Breast epithelium (tissue), 4 donors: ENCODE measurements at regions of chr6 and their contacts with region 1.

Region 1: GRCh38 chr6:150271501-150272263 is 97.1 kb upstream of the IYD start:
- DNase-seq: no peak
- H3K4me3 ChIP-seq: no peak overlapping the region
- H3K27ac ChIP-seq: no peak overlapping the region
- H3K4me1 ChIP-seq: no peaks in the 10 kb centered on the region
- H3K27me3 ChIP-seq: no peaks in the 10 kb centered on the region
- CTCF ChIP-seq: no peak
- POLR2A ChIP-seq: no peak

Region 2: DNA sequence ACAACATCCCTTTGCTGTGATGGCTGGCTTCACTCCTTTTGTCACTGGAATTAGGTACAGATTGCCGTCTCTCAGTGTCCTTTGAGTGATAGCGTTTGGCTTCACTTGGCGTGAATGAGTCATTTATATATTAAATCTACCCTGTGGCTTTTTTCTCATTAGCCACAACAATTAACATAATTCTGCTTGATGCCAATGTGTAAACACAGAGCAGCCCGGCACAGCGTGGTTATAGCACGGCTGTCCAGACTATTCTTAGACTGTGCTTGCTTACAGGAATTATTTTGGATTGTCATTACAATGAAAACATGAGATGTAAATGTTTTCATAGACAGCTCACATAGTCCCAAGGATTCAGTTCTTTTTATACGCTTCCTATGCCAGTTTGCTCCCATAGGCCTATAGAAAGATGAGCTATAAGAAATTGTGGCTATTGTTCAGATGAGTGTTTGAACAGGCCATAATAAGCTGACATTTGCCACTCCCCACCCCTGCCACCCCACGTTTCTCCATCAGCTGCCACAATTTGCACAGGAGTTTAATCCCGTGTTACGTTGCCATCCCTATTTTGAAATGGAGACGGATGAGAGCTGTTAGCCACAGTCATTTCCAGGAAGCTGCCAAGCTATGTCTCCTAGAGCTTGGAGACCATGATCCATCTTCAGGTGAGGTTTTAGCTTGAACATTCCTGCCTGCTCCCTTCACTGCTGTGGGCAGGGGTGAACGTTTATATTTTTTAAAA is 62.9 kb before region 1 on chr6:
- intact Hi-C with region 1: no loop called
- DNase-seq: no peak
- H3K4me3 ChIP-seq: no peak overlapping the region
- H3K27ac ChIP-seq: no peak overlapping the region
- H3K4me1 ChIP-seq: no peaks in the 10 kb centered on the region
- H3K27me3 ChIP-seq: no peaks in the 10 kb centered on the region
- CTCF ChIP-seq: no peak
- POLR2A ChIP-seq: no peak

Region 3: DNA sequence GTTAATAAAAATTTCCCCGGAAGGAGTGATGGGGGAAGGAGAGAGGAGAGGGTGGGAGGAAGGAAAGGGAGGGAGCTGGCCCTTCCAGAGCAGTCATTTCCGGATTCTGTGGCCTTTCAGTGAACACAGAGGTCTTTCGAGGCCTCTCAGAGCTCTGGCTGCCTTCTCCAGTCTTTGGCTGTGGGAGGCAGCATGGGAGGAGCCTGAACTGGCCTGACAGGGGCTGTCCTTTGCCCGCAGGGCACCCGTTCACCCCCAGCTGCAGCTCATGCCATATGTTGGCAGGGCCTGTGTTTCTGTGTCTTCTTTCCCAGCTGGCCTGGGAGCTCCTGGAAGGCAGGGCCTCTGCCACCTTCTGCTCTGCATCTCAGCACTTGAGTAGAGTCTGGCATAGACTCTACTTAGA is 33.3 kb before region 1 on chr6:
- intact Hi-C with region 1: loop called (anchors 1 kb)
- DNase-seq: peak in 1 of 2 donors; percentile 35
- H3K4me3 ChIP-seq: no peak overlapping the region
- H3K27ac ChIP-seq: peak overlapping the region; percentile 12 to 29
- H3K4me1 ChIP-seq: no peaks in the 10 kb centered on the region
- H3K27me3 ChIP-seq: no peaks in the 10 kb centered on the region
- CTCF ChIP-seq: no peak
- POLR2A ChIP-seq: no peak